Breast epithelium (tissue), 4 donors: ENCODE measurements at regions of chr20 and their contacts with region 1.

Region 1: DNA sequence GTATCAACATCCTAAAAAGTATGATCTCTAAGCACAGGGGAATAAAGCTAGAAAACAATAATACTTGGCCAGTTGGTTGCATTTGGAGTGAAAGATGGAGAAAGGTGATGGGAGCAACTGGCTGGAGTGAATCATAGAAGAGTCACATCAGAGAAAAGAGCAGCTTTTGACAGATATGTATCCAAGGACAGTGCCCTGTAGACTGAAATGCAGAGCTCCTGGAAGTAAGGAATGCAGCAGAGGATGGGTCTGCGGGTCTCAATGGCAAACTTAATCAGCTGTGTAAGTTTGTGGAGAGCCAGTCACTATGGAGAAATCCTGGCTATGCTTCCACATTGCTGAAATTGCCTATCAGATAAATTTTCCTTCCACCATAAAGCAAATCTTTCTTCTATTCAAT is 253.6 kb upstream of the PRND start:
- DNase-seq: no peak
- H3K4me3 ChIP-seq: no peak overlapping the region
- H3K27ac ChIP-seq: no peak overlapping the region
- H3K4me1 ChIP-seq: no peaks in the 10 kb centered on the region
- H3K27me3 ChIP-seq: no peaks in the 10 kb centered on the region
- CTCF ChIP-seq: no peak
- POLR2A ChIP-seq: no peak

Region 2: GRCh38 chr20:4504814-4505213 is 36.7 kb after region 1 on chr20:
- intact Hi-C with region 1: loop called (anchors 1 kb)
- DNase-seq: no peak
- H3K4me3 ChIP-seq: no peak overlapping the region
- H3K27ac ChIP-seq: no peak overlapping the region
- H3K4me1 ChIP-seq: no peaks in the 10 kb centered on the region
- H3K27me3 ChIP-seq: no peaks in the 10 kb centered on the region
- CTCF ChIP-seq: no peak
- POLR2A ChIP-seq: no peak

Region 3: GRCh38 chr20:4555188-4555890 is 87.2 kb after region 1 on chr20:
- intact Hi-C with region 1: no loop called
- DNase-seq: no peak
- H3K4me3 ChIP-seq: no peak overlapping the region
- H3K27ac ChIP-seq: no peak overlapping the region
- H3K4me1 ChIP-seq: no peaks in the 10 kb centered on the region
- H3K27me3 ChIP-seq: no peaks in the 10 kb centered on the region
- CTCF ChIP-seq: no peak
- POLR2A ChIP-seq: no peak

Region 4: GRCh38 chr20:5328268-5328667 is 860.2 kb after region 1 on chr20:
- intact Hi-C with region 1: no loop called
- DNase-seq: no peak
- H3K4me3 ChIP-seq: no peak overlapping the region
- H3K27ac ChIP-seq: no peak overlapping the region
- H3K4me1 ChIP-seq: no peaks in the 10 kb centered on the region
- H3K27me3 ChIP-seq: no peaks in the 10 kb centered on the region
- CTCF ChIP-seq: no peak
- POLR2A ChIP-seq: no peak